ENCODE measurements at regions of chr7 and their contacts with region 1.

Region 1: DNA sequence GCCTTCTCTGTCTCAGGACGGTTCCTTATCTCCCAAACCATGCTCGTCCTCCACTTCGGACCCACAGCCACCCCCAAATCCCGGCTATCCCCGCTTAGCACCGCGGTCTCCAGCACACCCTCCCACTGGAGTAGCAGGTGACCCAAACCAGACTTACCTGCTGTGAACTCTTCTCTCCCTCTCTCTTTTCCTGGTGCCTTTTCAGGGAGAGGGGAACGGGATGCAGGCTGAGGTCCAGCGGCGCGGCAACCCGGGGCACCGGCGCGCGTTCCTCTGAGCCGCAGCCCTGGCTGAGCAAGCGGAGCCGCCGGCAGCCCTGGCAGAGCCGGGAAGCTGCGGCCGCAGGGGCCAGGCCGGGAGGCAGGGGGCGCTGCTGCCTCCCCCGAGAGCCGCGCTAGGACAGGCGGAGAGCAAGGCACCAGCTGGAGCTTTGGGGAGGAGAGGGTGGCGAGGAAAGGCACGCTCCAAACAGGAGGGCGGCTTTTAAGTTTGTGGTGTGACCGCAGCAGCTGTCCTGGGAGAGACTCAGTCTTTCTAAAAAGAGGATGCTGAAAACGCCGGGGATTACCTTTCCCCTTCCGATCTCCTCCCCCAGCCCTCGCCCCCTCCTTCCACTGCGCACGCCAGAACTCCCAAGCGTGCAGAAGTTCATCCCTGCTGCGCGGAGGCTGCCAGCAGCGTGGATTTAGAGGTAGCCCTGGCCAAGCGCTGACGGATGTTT is at the start of gene SEMA3D:
- DNase-seq: peak; percentile 52 to 67
- ATAC-seq: peak; percentile 92 to 97 (median 93)
- H3K4me3 ChIP-seq: peak within 1 kb of the TSS; percentile 9 to 66 (median 52)
- H3K27ac ChIP-seq: peak within 1 kb of the TSS in 5 of 10 donors; percentile 14 to 61 (median 46)
- H3K4me1 ChIP-seq: peaks cover 0 to 21% (median 11%) of the 10 kb centered on the region in 9 donors
- H3K27me3 ChIP-seq: peaks cover 0 to 50% (median 43%) of the 10 kb centered on the region in 7 donors
- CTCF ChIP-seq: peak; percentile 24 to 81 (median 72)
- total RNA-seq, gene SEMA3D: 0.30 to 3.5 (median 1.2) TPM

Region 2: GRCh38 chr7:85068799-85069198 is 117.9 kb before region 1 on chr7:
- intact Hi-C with region 1: loop called in 1 of 10 experiments (anchors 10 kb)
- DNase-seq: no peak
- ATAC-seq: peak in 6 of 8 donors; percentile 44 to 83 (median 58)
- H3K4me3 ChIP-seq: no peak overlapping the region
- H3K27ac ChIP-seq: no peak overlapping the region
- H3K4me1 ChIP-seq: peaks cover 0 to 25% (median 8%) of the 10 kb centered on the region in 9 donors
- H3K27me3 ChIP-seq: no peaks in the 10 kb centered on the region
- CTCF ChIP-seq: no peak

Region 3: DNA sequence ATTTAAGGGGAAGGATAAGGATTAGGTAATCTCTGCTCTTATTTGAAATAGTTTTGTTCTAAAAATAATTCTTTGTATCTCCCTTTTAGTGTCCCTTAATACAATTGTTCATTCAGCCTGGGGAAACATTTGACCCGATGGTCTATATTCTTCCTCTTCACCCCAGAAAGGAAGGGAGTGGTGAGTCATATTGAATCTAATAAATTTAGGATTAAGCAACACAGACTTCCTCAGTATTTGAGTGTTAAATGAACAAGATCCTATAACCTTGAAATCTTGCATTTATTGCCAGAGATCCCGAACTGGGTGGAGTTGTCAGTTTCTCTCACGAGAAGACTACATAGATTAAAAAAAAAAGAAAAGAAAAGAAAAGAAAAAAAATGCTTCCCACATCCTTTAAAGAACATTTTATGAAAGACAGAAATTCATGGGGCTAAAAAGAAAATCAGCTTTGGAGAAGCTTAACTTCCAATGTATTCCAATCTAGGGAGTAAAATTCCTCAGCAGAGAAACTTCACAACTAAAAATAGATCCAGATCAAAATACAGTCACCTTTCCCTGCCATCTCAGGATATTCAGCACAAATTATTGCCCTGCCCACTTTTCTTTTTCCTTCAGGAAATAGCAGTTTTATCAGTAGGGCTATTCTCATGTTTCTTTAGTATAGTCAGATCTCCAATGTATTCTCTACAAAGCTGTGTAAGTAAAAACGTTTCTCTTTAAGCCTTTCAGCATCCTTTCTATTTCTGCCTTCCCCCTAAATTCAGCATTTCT is 82.1 kb before region 1 on chr7:
- intact Hi-C with region 1: loop called in 1 of 10 experiments (anchors 10 kb)
- DNase-seq: no peak
- ATAC-seq: peak in 4 of 8 donors; percentile 53 to 67 (median 61)
- H3K4me3 ChIP-seq: peak overlapping the region in 1 of 10 donors; percentile 4
- H3K27ac ChIP-seq: peak overlapping the region in 2 of 10 donors; percentile 6 to 23
- H3K4me1 ChIP-seq: peaks cover 0 to 33% (median 15%) of the 10 kb centered on the region in 9 donors
- H3K27me3 ChIP-seq: no peaks in the 10 kb centered on the region
- CTCF ChIP-seq: no peak

Region 4: GRCh38 chr7:85261336-85261735 is 74.7 kb after region 1 on chr7:
- intact Hi-C with region 1: no loop called
- DNase-seq: no peak
- ATAC-seq: no peak
- H3K4me3 ChIP-seq: no peak overlapping the region
- H3K27ac ChIP-seq: no peak overlapping the region
- H3K4me1 ChIP-seq: no peaks in the 10 kb centered on the region
- H3K27me3 ChIP-seq: no peaks in the 10 kb centered on the region
- CTCF ChIP-seq: no peak